SK-N-SH (cell line): ENCODE measurements at regions of chr3 and their contacts with region 1.

Region 1: GRCh38 chr3:94249585-94249984 is 186.7 kb downstream of the NSUN3 start:
- DNase-seq: peak; percentile 38
- H3K4me3 ChIP-seq: no peak overlapping the region; a peak in 1 of 4 replicates
- H3K27ac ChIP-seq: no peak overlapping the region
- H3K4me1 ChIP-seq: no peaks in the 10 kb centered on the region
- H3K27me3 ChIP-seq: no peaks in the 10 kb centered on the region
- CTCF ChIP-seq: peak; percentile 95
- EP300 ChIP-seq: no peak
- RAD21 ChIP-seq: peak; percentile 82

Region 2: DNA sequence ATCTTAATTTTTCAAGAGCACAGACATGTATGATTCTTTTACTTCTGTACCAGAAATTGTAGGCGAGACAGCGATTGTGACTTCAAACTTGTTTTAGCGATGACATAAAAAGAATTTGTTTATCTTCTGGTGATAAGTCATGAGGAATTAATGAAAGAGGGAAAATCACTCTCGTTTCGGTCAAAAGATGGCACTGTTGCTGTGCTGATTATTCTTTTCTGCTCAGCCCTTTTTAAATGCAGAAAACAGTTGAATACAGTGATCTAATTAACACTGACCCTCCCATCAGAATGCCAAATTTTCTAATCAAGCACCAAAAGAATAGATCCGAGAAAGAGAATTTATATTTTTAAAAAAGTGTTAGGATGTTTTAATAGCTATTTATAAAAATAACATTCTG is 134.1 kb before region 1 on chr3:
- CTCF ChIA-PET with region 1: interaction called, 12 read pairs
- POLR2A ChIA-PET with region 1: no interaction called
- DNase-seq: peak; percentile 27
- H3K4me3 ChIP-seq: no peak overlapping the region
- H3K27ac ChIP-seq: peak overlapping the region in 1 of 2 experiments; percentile 84; a peak in 2 of 4 replicates
- H3K4me1 ChIP-seq: peaks cover 17 to 27% of the 10 kb centered on the region in 2 experiments; a peak in 3 of 4 replicates
- H3K27me3 ChIP-seq: no peaks in the 10 kb centered on the region
- CTCF ChIP-seq: peak; percentile 79
- EP300 ChIP-seq: no peak; a peak in 1 of 4 replicates
- RAD21 ChIP-seq: peak; percentile 93

Region 3: DNA sequence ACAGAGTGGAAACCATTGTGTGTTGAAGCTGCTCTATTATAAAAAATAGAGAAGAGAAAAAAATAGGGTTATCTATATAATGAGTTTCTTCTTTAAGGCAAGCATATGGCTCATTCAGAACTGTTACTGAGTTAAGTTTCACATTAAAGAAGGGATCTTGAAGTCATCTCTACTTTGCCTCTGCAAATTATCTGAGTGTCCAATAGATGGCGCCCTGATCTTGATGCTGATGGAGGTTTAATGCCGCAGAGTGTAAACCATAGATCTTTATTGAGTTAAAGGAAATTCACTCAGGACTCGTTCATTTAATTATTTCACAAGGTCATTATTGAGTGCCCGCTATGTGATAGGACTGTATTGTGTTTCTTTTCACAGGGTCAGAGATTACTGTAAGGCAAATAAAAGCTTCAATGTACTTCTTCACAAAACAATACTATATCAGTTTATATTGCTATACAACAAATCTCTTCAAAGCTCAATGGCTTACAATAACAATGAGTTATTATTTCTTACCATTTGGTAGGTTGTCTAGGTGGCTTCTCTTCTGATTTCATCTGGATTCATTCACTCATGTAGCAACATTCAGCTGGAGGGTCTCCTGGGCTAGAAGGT is 15.3 kb before region 1 on chr3:
- CTCF ChIA-PET with region 1: interaction called, 34 read pairs
- POLR2A ChIA-PET with region 1: no interaction called
- DNase-seq: peak; percentile 31
- H3K4me3 ChIP-seq: no peak overlapping the region; a peak in 1 of 4 replicates
- H3K27ac ChIP-seq: no peak overlapping the region
- H3K4me1 ChIP-seq: no peaks in the 10 kb centered on the region
- H3K27me3 ChIP-seq: no peaks in the 10 kb centered on the region
- CTCF ChIP-seq: peak; percentile 84
- EP300 ChIP-seq: no peak
- RAD21 ChIP-seq: peak; percentile 74

Region 4: GRCh38 chr3:94269763-94270162 is 20.2 kb after region 1 on chr3:
- CTCF ChIA-PET with region 1: interaction called, 23 read pairs
- POLR2A ChIA-PET with region 1: no interaction called
- DNase-seq: no peak
- H3K4me3 ChIP-seq: no peak overlapping the region
- H3K27ac ChIP-seq: no peak overlapping the region; a peak in 1 of 4 replicates
- H3K4me1 ChIP-seq: no peaks in the 10 kb centered on the region; a peak in 1 of 4 replicates
- H3K27me3 ChIP-seq: no peaks in the 10 kb centered on the region; the same call in 1 of the 2 replicates
- CTCF ChIP-seq: no peak
- EP300 ChIP-seq: no peak
- RAD21 ChIP-seq: no peak

Region 5: GRCh38 chr3:94285870-94286269 is 36.3 kb after region 1 on chr3:
- CTCF ChIA-PET with region 1: interaction called, 21 read pairs
- POLR2A ChIA-PET with region 1: no interaction called
- DNase-seq: peak; percentile 10
- H3K4me3 ChIP-seq: no peak overlapping the region
- H3K27ac ChIP-seq: peak overlapping the region in 1 of 2 experiments; percentile 11; a peak in 1 of 4 replicates
- H3K4me1 ChIP-seq: peaks cover 0 to 2% of the 10 kb centered on the region in 2 experiments; a peak in 2 of 4 replicates
- H3K27me3 ChIP-seq: no peaks in the 10 kb centered on the region
- CTCF ChIP-seq: peak; percentile 57
- EP300 ChIP-seq: no peak
- RAD21 ChIP-seq: peak; percentile 47

Region 6: GRCh38 chr3:94303897-94304296 is 54.3 kb after region 1 on chr3:
- CTCF ChIA-PET with region 1: interaction called, 11 read pairs
- POLR2A ChIA-PET with region 1: no interaction called
- DNase-seq: no peak
- H3K4me3 ChIP-seq: no peak overlapping the region
- H3K27ac ChIP-seq: no peak overlapping the region
- H3K4me1 ChIP-seq: no peaks in the 10 kb centered on the region; a peak in 1 of 4 replicates
- H3K27me3 ChIP-seq: no peaks in the 10 kb centered on the region
- CTCF ChIP-seq: peak; percentile 40
- EP300 ChIP-seq: no peak
- RAD21 ChIP-seq: peak; percentile 51